HEK293T (cell line): ENCODE measurements at regions of chr15 and their contacts with region 1.

Region 1: DNA sequence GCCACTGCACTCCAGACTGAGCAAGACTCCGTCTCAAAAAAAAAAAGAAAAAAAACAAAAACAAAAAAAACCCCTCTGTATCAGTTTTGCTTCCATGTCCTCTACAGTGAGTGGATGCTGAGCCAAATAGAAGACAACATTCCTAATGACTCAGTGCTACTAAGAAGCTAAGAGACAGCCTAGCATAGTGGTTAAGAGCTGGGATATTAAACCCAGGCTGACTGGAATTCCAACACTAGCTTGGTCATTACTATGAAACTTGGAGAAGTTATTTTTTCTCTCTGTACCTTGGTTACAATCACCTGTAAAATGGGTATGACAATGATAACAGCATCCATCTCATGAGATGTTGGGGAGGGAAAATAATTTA is 60.9 kb upstream of the PYGO1 start:
- DNase-seq: no peak

Region 2: DNA sequence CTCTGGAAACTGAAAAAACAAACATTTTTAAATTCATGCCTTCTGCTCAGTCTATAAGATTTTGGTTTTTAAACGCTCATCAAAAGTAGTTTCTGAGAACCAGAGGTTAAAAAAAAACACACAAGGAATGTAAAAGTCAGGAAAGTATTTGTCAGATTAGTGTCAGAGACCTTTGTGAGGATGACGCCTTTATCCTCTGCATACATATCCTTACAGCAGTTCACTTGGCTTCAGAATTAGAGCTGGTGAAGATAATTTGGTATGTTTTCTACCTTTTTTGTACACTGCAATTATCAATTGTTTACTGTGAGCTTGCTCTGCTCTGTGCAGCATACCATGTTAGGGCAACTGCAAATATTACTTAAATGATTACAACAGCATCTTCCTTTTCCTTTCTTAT is 85.6 kb after region 1 on chr15:
- CTCF ChIA-PET with region 1: interaction called, 10 read pairs
- POLR2A ChIA-PET with region 1: no interaction called
- DNase-seq: no peak